Posterior cingulate gyrus (tissue), 11 donors: ENCODE measurements at regions of chr5 and their contacts with region 1.

Region 1: DNA sequence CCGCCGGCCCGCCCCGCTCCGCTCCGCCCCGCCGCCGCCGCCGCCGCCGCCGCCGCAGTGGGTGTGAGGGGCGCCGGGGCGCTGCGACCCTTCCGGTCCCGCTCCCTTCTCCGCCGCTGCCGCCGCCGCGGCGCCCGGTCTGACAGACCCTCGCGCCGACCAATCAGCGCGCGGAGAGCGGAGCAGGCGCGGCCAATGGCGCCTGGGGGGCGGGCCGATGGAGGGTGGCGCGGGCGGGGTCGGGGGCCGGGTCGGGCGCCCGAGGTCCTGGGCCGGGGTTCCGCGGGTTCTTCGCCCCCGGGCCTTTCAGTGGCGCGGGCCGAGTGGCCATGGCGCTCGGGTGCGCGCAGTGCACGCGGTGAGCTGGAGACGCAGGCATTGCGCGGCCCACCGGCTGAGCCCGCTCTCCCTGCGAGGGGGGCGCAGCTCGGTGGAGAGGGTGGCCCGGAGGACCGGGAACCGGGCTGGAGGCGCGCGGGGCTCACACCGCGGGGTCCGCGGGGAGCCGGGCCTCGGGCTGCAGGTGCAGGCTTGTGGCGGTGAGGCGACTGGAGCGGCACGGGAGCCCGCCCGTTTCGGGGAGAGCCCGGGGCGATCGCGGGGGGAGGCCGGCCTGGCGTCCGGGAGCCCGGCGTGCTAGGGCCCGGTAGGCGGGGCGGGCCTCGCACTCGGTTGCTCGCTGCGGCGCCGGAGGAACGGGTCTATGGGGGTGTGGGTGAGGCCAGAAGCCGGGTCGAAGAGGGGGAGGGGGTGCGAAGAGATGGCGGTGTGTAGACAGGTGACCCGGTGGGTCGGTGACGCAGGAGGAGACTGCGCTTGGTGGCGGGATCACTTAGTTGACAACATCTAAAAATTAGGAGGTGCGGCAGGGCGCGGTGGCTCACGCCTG is at the start of gene MAPK9:
- DNase-seq: peak; percentile 73 to 98 (median 82)

Region 2: DNA sequence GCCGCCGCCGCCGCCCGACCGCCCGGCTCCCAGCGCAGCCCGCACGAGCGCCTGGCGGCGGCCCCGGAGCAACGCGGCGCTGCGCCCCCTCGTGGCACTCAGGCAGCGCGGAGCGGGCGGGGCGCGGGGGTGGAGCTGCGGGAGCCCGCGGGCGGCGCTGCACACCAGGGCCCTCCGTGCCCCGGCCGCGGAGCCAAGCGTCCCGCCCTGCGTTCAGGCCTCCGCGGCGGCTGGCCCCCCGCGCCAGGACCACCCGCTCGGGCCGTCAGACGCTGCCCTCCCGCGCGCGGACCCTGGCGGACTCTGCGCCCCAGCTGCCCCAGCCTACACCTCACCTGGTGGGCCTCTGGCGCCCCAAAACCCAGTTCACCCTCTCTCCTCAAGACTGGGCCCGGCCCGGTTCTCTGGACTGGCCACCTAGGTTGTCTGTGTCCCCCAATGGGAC is 83.0 kb before region 1 on chr5 and contains the start of gene RASGEF1C:
- intact Hi-C with region 1: loop called (anchors 5 kb)
- DNase-seq: peak in 9 of 10 donors; percentile 39 to 95 (median 66)

Region 3: DNA sequence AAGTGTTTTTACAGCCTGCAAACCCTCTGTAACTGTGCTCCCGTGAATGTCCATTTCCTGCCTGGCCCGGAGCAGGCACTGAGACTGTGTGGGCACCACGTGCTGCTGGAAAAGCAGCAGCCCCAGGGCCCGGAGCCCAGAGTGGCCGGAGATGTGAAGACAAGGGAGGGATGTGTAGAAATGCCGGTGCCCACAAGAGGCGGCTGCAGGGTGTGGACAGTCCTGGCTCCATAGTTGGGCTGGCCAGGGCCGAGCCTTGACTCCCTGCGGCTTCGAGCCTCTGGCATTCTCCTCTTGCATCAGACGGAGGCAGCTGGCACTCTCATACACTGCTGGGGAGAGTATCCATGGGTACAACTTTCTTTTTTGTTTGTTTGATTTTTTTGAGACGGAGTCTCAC is 74.1 kb after region 1 on chr5:
- intact Hi-C with region 1: loop called (anchors 5 kb)
- DNase-seq: peak; percentile 52 to 95 (median 72)

Region 4: DNA sequence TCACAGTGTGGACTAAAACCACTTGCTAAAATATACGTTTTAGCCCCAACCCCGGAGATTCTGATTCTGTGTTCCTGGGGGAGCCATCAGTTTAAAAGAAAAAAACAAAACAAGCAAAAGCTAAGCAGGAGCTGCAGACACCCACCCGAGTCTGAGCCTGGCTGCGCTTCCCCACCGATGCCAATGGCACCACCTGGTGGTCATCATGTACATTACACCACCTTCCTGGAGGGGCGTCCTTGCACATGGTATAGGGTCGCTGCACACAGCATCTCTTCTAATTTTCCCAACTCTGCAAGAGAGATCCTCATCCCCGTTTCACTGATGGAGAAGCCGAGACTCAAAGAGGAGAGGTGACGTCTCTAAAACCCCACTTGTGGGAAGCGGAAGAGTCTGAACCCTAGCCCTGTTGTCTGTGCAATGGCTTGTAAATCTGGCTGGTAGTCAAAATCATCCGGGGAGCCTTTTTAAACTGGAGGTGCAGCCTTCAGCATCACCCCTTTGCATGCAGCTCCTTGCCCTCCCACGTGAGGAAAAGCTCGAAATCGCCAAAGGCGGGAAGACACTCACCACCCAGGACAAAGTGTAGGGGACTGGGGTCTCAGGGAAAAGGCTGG is 178.9 kb after region 1 on chr5:
- intact Hi-C with region 1: loop called (anchors 1 kb)
- DNase-seq: peak in 9 of 10 donors; percentile 52 to 95 (median 75)